ENCODE measurements at regions of chr17 and their contacts with region 1.

Region 1: DNA sequence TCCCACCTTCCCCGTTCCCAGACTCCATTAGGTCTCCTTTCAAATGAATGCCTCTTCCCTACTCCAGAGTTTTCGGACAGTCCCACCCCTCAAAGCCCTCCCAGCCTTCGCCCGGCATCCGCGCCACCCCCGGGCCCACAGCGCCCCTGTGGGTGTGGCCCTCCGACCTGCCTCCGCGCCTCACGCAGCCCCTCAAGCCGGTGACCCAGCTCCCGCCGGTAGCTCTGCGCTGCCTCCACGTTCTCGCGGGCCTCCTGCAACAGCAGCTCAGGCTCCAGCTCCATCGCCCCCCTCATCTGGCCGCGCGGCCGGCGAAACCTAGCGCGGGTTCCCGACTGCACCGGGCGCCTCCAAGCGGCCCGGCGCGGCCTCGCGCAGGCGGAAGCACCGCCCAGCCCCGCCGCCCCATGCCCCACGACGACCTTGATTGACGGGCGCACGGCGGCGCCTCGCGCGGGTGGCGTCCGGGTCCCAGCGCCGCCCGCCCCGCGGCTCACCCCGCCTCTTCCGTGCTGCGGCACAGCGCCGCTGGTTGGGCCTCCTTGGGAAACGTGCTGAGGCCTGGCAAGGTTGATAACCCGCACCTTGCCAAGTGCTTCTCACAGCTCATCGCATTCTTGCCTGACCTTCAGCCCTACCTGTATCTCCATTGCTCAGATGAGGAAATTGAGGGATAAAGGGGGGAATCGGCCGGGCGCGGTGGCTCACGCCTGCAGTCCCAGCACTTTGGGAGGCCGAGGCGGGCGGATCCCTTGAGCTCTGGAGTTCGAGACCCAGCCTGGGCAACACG is at the start of gene CRLF3:
- DNase-seq: peak; percentile 95
- H3K4me3 ChIP-seq: peak within 1 kb of the TSS; percentile 80
- H3K27ac ChIP-seq: peak within 1 kb of the TSS; percentile 85
- H3K4me1 ChIP-seq: peaks cover 44% of the 10 kb centered on the region
- CTCF ChIP-seq: peak; percentile 78
- total RNA-seq, gene CRLF3: 26.4 and 29.4 TPM in 2 replicates

Region 2: DNA sequence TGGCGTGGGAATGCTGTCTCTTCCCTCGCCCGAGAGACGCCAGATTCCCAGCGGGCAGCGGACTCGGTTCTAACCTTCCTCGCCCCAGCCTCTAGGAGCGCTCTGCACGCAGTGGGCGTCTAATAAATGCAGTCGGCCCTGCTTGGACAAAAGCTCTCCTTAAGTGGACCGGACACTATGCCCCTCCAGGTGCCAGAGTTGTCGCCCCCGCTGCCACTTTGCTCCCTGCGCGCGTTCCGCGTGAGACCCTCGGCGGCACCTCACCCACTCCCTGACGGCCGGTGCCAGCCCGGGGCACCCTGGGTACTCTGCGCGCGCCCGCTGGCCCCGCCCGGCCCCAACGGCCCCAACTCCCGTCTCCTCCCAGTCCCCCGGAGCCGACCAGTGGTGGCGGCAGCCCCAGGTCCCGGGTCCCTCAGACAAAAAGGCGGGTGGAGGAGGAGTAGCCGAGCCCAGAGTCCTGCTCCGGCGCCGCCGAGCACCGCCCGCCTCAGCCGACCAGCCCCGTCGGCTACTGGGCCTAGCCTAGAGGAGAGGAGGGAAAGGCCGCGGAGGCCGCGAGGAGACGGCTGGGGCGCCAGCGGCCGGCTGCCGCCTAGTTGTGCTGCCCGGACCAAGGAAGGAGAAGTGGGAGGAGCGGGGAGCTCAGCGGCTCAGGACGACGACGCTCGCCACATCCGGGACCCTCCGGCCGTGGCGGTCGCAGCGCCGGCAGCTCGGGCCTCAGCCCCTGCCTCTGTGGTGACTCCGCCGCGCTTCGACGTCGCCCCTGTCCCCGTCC is 224.3 kb before region 1 on chr17:
- CTCF ChIA-PET with region 1: no interaction called
- POLR2A ChIA-PET with region 1: no interaction called
- intact Hi-C with region 1: loop called (anchors 5 kb)
- DNase-seq: peak; percentile 89
- H3K4me3 ChIP-seq: peak overlapping the region; percentile 77
- H3K27ac ChIP-seq: peak overlapping the region; percentile 88
- H3K4me1 ChIP-seq: peaks cover 21% of the 10 kb centered on the region
- CTCF ChIP-seq: peak; percentile 73

Region 3: GRCh38 chr17:30701498-30701989 is 123.0 kb before region 1 on chr17:
- CTCF ChIA-PET with region 1: no interaction called
- POLR2A ChIA-PET with region 1: interaction called, 3 read pairs
- intact Hi-C with region 1: loop called (anchors 5 kb)
- DNase-seq: no peak
- H3K4me3 ChIP-seq: no peak overlapping the region
- H3K27ac ChIP-seq: no peak overlapping the region
- H3K4me1 ChIP-seq: peaks cover 1% of the 10 kb centered on the region
- CTCF ChIP-seq: no peak

Region 4: DNA sequence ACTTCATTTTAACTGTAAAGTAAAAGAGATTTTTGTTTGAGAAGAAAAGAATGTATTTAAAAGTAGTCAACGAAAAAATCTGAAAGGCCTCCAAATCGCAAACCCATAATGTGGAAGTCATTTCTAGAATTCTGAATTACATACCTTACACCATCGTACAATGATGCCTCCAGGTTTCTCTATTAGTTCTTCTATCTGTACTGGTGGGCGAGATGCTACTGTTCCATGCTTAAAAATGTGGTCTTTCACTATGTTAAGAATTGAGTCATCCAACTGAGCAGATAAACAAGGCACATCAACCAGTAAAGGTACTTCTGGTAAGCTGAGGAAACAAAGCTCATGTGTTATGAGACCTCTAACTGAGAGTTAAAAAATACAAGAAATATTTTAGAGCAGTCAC is 28.5 kb before region 1 on chr17:
- CTCF ChIA-PET with region 1: no interaction called
- POLR2A ChIA-PET with region 1: no interaction called
- intact Hi-C with region 1: no loop called
- DNase-seq: no peak
- H3K4me3 ChIP-seq: no peak overlapping the region
- H3K27ac ChIP-seq: no peak overlapping the region
- H3K4me1 ChIP-seq: no peaks in the 10 kb centered on the region
- CTCF ChIP-seq: no peak

Region 5: DNA sequence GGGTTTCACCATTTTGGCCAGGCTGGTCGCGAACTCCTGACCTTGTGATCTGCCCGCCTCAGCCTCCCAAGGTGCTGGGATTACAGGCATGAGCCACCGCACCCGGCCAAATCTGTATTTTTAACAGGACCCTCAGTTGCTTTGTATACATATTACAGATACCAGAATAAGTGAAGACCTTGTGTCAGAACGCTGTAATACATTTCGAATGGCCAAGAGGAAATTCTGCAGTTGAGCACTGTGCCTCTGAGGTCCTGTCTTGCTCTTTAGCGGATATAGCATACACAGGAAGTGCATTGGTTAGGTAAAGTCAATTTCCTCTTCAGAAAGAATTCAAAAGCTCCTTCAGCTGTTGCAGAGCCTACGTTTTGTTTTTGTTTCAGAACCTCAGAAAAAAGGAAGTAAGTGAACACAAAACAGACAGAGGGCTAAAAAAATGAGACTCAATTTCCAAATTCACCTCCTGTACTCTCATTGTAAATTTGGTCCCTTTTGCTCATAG is 15.7 kb before region 1 on chr17:
- CTCF ChIA-PET with region 1: interaction called, 6 read pairs
- POLR2A ChIA-PET with region 1: interaction called, 79 read pairs
- intact Hi-C with region 1: loop called (anchors 1 kb)
- DNase-seq: peak; percentile 95
- H3K4me3 ChIP-seq: peak overlapping the region; percentile 56
- H3K27ac ChIP-seq: peak overlapping the region; percentile 100
- H3K4me1 ChIP-seq: peaks cover 72% of the 10 kb centered on the region
- CTCF ChIP-seq: no peak

Measured in OCI-LY7 (cell line).